Mammary epithelial cell (primary cell): ENCODE measurements at regions of chr13 and their contacts with region 1.

Region 1: DNA sequence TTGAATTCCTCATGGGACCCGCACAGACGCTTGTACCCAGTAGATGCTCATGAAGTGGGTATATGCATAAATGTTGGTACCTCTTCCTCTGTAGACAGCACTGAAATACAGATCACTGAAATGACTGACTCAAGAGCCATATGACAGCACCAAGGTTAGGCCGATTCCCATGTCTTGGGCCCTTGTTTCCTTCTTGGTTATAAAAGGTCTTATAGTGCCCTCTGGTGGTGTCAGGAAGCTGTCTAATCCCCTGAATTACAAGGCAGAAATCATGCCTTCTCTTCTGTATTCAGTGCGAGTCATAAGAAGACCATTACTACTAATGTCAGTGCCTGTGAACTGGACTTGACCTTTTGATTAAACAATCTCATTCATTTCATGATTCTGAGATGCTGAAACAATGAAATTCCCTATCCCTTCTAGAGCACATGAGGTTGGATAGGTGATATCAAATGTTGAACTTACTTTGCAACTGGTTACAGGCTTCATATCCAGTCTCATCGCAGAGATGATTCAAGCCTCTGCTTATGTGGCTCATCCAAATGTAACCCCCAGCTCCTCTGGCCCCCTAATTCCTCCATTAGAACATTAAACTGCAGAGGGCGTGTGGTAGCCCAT is 59.7 kb downstream of the SPATA13 start:
- DNase-seq: peak; percentile 67
- H3K4me3 ChIP-seq: no peak overlapping the region
- H3K27ac ChIP-seq: no peak overlapping the region
- H3K4me1 ChIP-seq: peaks cover 7% of the 10 kb centered on the region
- H3K27me3 ChIP-seq: peaks cover 4% of the 10 kb centered on the region
- CTCF ChIP-seq: peak; percentile 75 to 79

Region 2: GRCh38 chr13:23466144-23467002 is 753.8 kb before region 1 on chr13:
- CTCF ChIA-PET with region 1: no interaction called
- dilution Hi-C with region 1: no loop called
- in situ Hi-C with region 1: no loop called
- intact Hi-C with region 1: loop called (anchors 5 kb)
- DNase-seq: peak; percentile 75
- H3K4me3 ChIP-seq: peak overlapping the region; percentile 40 to 48 (median 45)
- H3K27ac ChIP-seq: no peak overlapping the region
- H3K4me1 ChIP-seq: peaks cover 9% of the 10 kb centered on the region
- H3K27me3 ChIP-seq: peaks cover 6% of the 10 kb centered on the region
- CTCF ChIP-seq: peak; percentile 44 to 59

Region 3: DNA sequence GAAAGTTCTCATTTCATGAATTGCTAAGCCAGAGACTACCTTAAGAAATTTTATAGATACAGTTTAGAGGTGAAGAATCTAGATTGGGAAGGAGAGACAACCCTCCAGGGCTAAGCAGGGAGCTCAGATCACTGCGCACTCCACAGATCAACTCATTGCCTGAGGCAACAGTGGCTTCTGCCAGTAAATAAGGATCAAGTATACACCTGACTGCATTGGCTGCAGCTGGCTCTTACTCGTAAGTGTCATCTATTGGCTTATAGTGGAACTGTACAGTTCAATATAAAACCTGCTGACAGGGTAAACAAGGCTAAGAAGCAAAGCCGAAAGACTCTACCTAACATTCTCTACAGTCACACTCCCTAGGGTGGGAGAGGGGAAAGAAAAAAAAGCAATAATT is 304.9 kb before region 1 on chr13:
- CTCF ChIA-PET with region 1: no interaction called
- dilution Hi-C with region 1: no loop called
- in situ Hi-C with region 1: loop called (anchors 10 to 25 kb)
- intact Hi-C with region 1: no loop called
- DNase-seq: no peak
- H3K4me3 ChIP-seq: no peak overlapping the region
- H3K27ac ChIP-seq: no peak overlapping the region
- H3K4me1 ChIP-seq: peaks cover 4% of the 10 kb centered on the region
- H3K27me3 ChIP-seq: peaks cover 2% of the 10 kb centered on the region
- CTCF ChIP-seq: no peak

Region 4: DNA sequence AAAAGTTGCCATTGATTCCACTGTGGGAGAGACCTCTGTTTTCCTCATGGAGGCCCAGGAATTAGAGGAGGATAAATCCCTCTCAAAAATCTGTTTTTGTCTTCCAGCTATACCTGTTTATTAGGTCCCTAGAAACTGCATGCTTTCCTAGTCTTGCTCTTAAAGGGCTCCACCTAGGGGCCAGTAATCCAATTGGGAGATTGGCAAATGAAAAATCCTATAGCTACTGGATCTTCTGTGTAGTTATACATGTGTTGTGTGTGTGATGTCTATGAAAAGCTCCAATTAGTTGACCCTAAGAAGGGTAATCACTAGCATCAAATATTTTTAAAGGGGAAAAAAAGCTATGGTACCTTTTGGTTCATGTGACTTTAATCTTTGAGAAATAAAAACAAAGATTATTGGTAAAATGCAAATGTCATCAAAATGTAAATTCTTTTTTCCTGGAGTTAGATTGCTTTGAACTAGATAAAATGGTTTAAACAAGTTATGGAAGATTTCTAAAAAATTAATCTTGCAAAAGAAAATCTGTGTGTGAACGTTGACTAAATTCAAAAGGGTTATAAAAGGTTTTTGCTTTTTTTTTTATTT is 259.5 kb before region 1 on chr13:
- CTCF ChIA-PET with region 1: interaction called, 12 read pairs
- dilution Hi-C with region 1: no loop called
- in situ Hi-C with region 1: no loop called
- intact Hi-C with region 1: no loop called
- DNase-seq: peak; percentile 47
- H3K4me3 ChIP-seq: no peak overlapping the region
- H3K27ac ChIP-seq: no peak overlapping the region
- H3K4me1 ChIP-seq: peaks cover 16% of the 10 kb centered on the region
- H3K27me3 ChIP-seq: no peaks in the 10 kb centered on the region
- CTCF ChIP-seq: peak; percentile 76 to 84

Region 5: GRCh38 chr13:24053519-24054251 is 166.5 kb before region 1 on chr13:
- CTCF ChIA-PET with region 1: no interaction called
- dilution Hi-C with region 1: no loop called
- in situ Hi-C with region 1: loop called in 1 of 2 experiments (anchors 10 kb)
- intact Hi-C with region 1: loop called (anchors 1 kb)
- DNase-seq: peak; percentile 74
- H3K4me3 ChIP-seq: no peak overlapping the region
- H3K27ac ChIP-seq: no peak overlapping the region
- H3K4me1 ChIP-seq: peaks cover 11% of the 10 kb centered on the region
- H3K27me3 ChIP-seq: no peaks in the 10 kb centered on the region
- CTCF ChIP-seq: peak; percentile 62 to 86

Region 6: GRCh38 chr13:24207841-24208667 is 12.1 kb before region 1 on chr13:
- CTCF ChIA-PET with region 1: no interaction called
- dilution Hi-C with region 1: no loop called
- in situ Hi-C with region 1: no loop called
- intact Hi-C with region 1: no loop called
- DNase-seq: peak; percentile 67
- H3K4me3 ChIP-seq: no peak overlapping the region
- H3K27ac ChIP-seq: no peak overlapping the region
- H3K4me1 ChIP-seq: no peaks in the 10 kb centered on the region
- H3K27me3 ChIP-seq: peaks cover 3% of the 10 kb centered on the region
- CTCF ChIP-seq: no peak